CD8-positive, alpha-beta T cell (primary cell): ENCODE measurements at regions of chr6 and their contacts with region 1.

Region 1: GRCh38 chr6:75208298-75209183 is 2.7 kb upstream of the COL12A1 start:
- DNase-seq: peak; percentile 68 to 89 (median 82)
- ATAC-seq: peak; percentile 83
- H3K4me3 ChIP-seq: peak overlapping the region; percentile 4 to 28
- H3K4me3 Mint-ChIP-seq: peak overlapping the region; percentile 75
- H3K27ac ChIP-seq: no peak overlapping the region
- H3K27ac Mint-ChIP-seq: no peak overlapping the region
- H3K4me1 ChIP-seq: peaks cover 47% of the 10 kb centered on the region
- H3K4me1 Mint-ChIP-seq: peaks cover 52% of the 10 kb centered on the region
- H3K27me3 ChIP-seq: peaks cover 6 to 23% of the 10 kb centered on the region in 2 experiments
- H3K27me3 Mint-ChIP-seq: peaks cover 71% of the 10 kb centered on the region
- CTCF ChIP-seq: peak; percentile 70

Region 2: DNA sequence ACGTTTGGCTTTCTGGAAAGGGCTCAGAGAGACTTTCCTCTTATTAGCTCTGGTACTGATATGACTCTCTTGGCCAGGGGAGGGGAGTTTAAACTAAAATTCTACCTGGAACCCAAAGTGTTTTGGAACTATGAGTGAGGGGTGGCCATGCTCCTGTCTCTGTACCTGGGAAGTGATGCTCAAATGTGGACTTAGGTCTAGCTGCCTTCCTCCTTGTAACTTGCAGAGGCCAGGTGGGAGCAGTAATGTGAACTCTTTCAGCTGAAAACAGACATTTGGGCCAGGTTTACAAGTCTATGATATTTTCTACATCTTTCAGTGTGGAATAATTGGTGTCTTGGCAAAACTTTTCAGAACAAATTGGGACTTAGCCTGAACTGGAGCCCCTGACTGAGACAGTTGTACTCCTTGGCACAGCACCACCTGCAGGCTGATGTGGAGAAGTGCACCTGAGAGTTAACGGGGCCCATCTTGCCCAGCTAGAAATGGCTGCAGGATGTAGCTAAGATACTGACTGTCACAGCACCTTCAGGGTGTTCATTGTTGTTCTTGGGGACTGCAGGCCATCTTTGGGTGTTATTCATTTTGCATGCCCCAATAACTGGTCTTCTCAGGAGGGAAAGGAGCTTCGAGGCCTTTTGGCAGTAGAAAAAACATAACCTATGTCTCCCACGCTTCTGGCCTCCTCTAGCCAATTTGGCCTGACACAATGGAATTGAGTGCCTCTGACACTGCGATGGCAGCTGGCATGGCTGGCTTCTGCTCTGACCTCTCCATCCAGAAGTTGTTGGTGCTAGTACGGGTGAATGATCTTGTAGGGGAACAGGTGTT is 1475.5 kb before region 1 on chr6:
- CTCF ChIA-PET with region 1: interaction called, 220 read pairs
- POLR2A ChIA-PET with region 1: no interaction called
- intact Hi-C with region 1: no loop called
- DNase-seq: peak; percentile 36 to 78 (median 62)
- ATAC-seq: peak; percentile 100
- H3K4me3 ChIP-seq: no peak overlapping the region
- H3K4me3 Mint-ChIP-seq: no peak overlapping the region
- H3K27ac ChIP-seq: no peak overlapping the region
- H3K27ac Mint-ChIP-seq: no peak overlapping the region
- H3K4me1 ChIP-seq: no peaks in the 10 kb centered on the region
- H3K4me1 Mint-ChIP-seq: no peaks in the 10 kb centered on the region
- H3K27me3 ChIP-seq: no peaks in the 10 kb centered on the region
- H3K27me3 Mint-ChIP-seq: no peaks in the 10 kb centered on the region
- CTCF ChIP-seq: peak; percentile 77

Region 3: DNA sequence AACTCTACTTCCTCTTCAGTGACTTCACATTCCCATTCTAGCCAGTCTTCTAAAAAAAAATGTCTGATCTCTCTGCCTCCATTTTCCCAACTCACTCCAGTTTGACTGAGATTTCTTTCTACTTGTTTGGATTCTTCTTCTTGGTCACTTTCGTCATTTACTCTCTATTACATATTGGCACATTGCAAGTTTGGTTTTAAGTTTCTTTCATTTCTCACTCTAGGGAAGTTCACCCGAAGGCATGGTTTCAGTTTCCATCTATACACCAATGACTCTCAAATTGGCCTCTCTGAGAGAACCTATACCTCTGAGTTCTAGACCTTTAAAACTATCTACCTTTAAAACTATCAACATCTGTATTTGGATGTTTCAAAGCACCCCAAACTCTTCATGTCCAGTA is 1461.3 kb before region 1 on chr6:
- CTCF ChIA-PET with region 1: interaction called, 220 read pairs
- POLR2A ChIA-PET with region 1: no interaction called
- intact Hi-C with region 1: no loop called
- DNase-seq: peak in 2 of 9 experiments; percentile 9 to 20
- ATAC-seq: no peak
- H3K4me3 ChIP-seq: peak overlapping the region in 1 of 2 experiments; percentile 14
- H3K4me3 Mint-ChIP-seq: no peak overlapping the region
- H3K27ac ChIP-seq: no peak overlapping the region
- H3K27ac Mint-ChIP-seq: no peak overlapping the region
- H3K4me1 ChIP-seq: no peaks in the 10 kb centered on the region
- H3K4me1 Mint-ChIP-seq: no peaks in the 10 kb centered on the region
- H3K27me3 ChIP-seq: no peaks in the 10 kb centered on the region
- H3K27me3 Mint-ChIP-seq: no peaks in the 10 kb centered on the region
- CTCF ChIP-seq: no peak

Region 4: GRCh38 chr6:73929421-73929820 is 1279.1 kb before region 1 on chr6:
- CTCF ChIA-PET with region 1: no interaction called
- POLR2A ChIA-PET with region 1: no interaction called
- intact Hi-C with region 1: no loop called
- DNase-seq: no peak
- ATAC-seq: no peak
- H3K4me3 ChIP-seq: no peak overlapping the region
- H3K4me3 Mint-ChIP-seq: no peak overlapping the region
- H3K27ac ChIP-seq: no peak overlapping the region
- H3K27ac Mint-ChIP-seq: no peak overlapping the region
- H3K4me1 ChIP-seq: no peaks in the 10 kb centered on the region
- H3K4me1 Mint-ChIP-seq: no peaks in the 10 kb centered on the region
- H3K27me3 ChIP-seq: no peaks in the 10 kb centered on the region
- H3K27me3 Mint-ChIP-seq: no peaks in the 10 kb centered on the region
- CTCF ChIP-seq: no peak

Region 5: GRCh38 chr6:74091136-74091793 is 1117.3 kb before region 1 on chr6:
- CTCF ChIA-PET with region 1: interaction called, 22 read pairs
- POLR2A ChIA-PET with region 1: no interaction called
- intact Hi-C with region 1: loop called in 1 of 2 experiments (anchors 2 kb)
- DNase-seq: peak in 2 of 9 experiments; percentile 7 to 25
- ATAC-seq: no peak
- H3K4me3 ChIP-seq: no peak overlapping the region
- H3K4me3 Mint-ChIP-seq: no peak overlapping the region
- H3K27ac ChIP-seq: no peak overlapping the region
- H3K27ac Mint-ChIP-seq: no peak overlapping the region
- H3K4me1 ChIP-seq: no peaks in the 10 kb centered on the region
- H3K4me1 Mint-ChIP-seq: no peaks in the 10 kb centered on the region
- H3K27me3 ChIP-seq: no peaks in the 10 kb centered on the region
- H3K27me3 Mint-ChIP-seq: no peaks in the 10 kb centered on the region
- CTCF ChIP-seq: peak; percentile 47

Region 6: GRCh38 chr6:75234126-75234865 is 25.8 kb after region 1 on chr6:
- CTCF ChIA-PET with region 1: interaction called, 12 read pairs
- POLR2A ChIA-PET with region 1: no interaction called
- intact Hi-C with region 1: no loop called
- DNase-seq: no peak
- ATAC-seq: no peak
- H3K4me3 ChIP-seq: no peak overlapping the region
- H3K4me3 Mint-ChIP-seq: no peak overlapping the region
- H3K27ac ChIP-seq: no peak overlapping the region
- H3K27ac Mint-ChIP-seq: no peak overlapping the region
- H3K4me1 ChIP-seq: no peaks in the 10 kb centered on the region
- H3K4me1 Mint-ChIP-seq: peaks cover 3% of the 10 kb centered on the region
- H3K27me3 ChIP-seq: no peaks in the 10 kb centered on the region
- H3K27me3 Mint-ChIP-seq: no peaks in the 10 kb centered on the region
- CTCF ChIP-seq: no peak

Region 7: GRCh38 chr6:75334266-75335040 is 125.9 kb after region 1 on chr6:
- CTCF ChIA-PET with region 1: no interaction called
- POLR2A ChIA-PET with region 1: no interaction called
- intact Hi-C with region 1: no loop called
- DNase-seq: no peak
- ATAC-seq: no peak
- H3K4me3 ChIP-seq: no peak overlapping the region
- H3K4me3 Mint-ChIP-seq: no peak overlapping the region
- H3K27ac ChIP-seq: no peak overlapping the region
- H3K27ac Mint-ChIP-seq: no peak overlapping the region
- H3K4me1 ChIP-seq: no peaks in the 10 kb centered on the region
- H3K4me1 Mint-ChIP-seq: no peaks in the 10 kb centered on the region
- H3K27me3 ChIP-seq: peaks cover 0 to 2% of the 10 kb centered on the region in 2 experiments
- H3K27me3 Mint-ChIP-seq: peaks cover 6% of the 10 kb centered on the region
- CTCF ChIP-seq: no peak

Region 8: DNA sequence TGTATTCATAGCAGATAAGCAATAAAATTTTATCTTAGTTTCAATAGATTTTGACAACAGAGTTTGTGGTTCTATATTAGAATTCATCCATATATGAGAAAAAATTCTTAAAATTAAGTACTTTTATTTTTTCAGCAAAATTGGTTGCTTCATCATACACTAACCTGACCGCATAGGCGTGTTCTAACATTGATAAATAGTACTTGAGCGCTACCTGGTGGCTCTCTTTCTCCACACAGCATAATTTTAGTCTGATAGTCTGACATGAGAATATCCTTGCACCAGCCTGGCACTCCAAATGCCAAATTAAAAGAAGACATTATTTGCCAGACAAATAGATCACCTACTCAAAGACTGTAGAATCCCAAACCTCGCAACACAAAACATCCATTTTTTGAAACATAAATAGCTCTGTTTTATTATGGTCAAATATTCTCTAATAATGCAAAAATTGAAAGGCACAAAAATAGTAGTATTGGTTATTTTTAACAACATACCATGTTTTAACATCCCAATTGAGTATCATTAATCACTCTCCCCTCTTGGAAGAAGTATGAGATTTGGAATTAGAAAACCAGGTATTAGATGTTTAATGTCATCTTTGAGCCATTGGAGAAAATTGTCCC is 318.1 kb after region 1 on chr6:
- CTCF ChIA-PET with region 1: no interaction called
- POLR2A ChIA-PET with region 1: no interaction called
- intact Hi-C with region 1: loop called in 1 of 2 experiments (anchors 5 kb)
- DNase-seq: peak in 8 of 9 experiments; percentile 12 to 76 (median 42)
- ATAC-seq: peak; percentile 84
- H3K4me3 ChIP-seq: no peak overlapping the region
- H3K4me3 Mint-ChIP-seq: no peak overlapping the region
- H3K27ac ChIP-seq: no peak overlapping the region
- H3K27ac Mint-ChIP-seq: no peak overlapping the region
- H3K4me1 ChIP-seq: no peaks in the 10 kb centered on the region
- H3K4me1 Mint-ChIP-seq: no peaks in the 10 kb centered on the region
- H3K27me3 ChIP-seq: peaks cover 0 to 3% of the 10 kb centered on the region in 2 experiments
- H3K27me3 Mint-ChIP-seq: peaks cover 36% of the 10 kb centered on the region
- CTCF ChIP-seq: peak; percentile 66